ENCODE measurements at regions of chr10 and their contacts with region 1.

Region 1: GRCh38 chr10:125982260-125982948 is 86.0 kb downstream of the FANK1 start:
- DNase-seq: peak; percentile 18 to 47
- H3K4me3 ChIP-seq: no peak overlapping the region
- H3K27ac ChIP-seq: no peak overlapping the region
- H3K4me1 ChIP-seq: no peaks in the 10 kb centered on the region
- H3K27me3 ChIP-seq: no peaks in the 10 kb centered on the region
- CTCF ChIP-seq: peak; percentile 72

Region 2: DNA sequence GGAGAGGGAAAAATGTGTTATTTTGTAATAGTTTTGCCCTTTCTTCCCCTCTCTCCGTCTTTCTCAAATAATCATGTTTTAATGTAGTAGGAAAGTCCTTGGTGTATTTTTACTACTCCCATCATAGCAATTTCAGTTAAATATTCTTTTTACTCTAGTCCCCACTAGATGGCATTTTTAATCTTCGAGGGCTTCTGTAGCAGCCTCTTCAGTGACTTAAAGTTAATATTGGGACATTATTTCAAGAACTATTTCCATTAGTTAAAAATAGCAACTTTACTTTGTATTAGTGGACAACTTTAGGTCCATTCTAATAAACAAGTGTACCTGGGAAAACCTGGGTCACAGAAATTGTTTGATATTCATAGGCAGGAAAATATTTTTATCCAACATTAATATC is 239.9 kb before region 1 on chr10:
- CTCF ChIA-PET with region 1: no interaction called
- POLR2A ChIA-PET with region 1: no interaction called
- intact Hi-C with region 1: no loop called
- DNase-seq: no peak
- H3K4me3 ChIP-seq: no peak overlapping the region
- H3K27ac ChIP-seq: no peak overlapping the region
- H3K4me1 ChIP-seq: no peaks in the 10 kb centered on the region
- H3K27me3 ChIP-seq: no peaks in the 10 kb centered on the region
- CTCF ChIP-seq: peak; percentile 31; the same call in 1 of the 2 replicates

Region 3: GRCh38 chr10:125868372-125868975 is 113.9 kb before region 1 on chr10:
- CTCF ChIA-PET with region 1: interaction called, 3 read pairs
- POLR2A ChIA-PET with region 1: no interaction called
- intact Hi-C with region 1: loop called (anchors 5 kb)
- DNase-seq: peak in 1 of 2 experiments; percentile 9
- H3K4me3 ChIP-seq: no peak overlapping the region
- H3K27ac ChIP-seq: no peak overlapping the region
- H3K4me1 ChIP-seq: no peaks in the 10 kb centered on the region
- H3K27me3 ChIP-seq: no peaks in the 10 kb centered on the region
- CTCF ChIP-seq: peak; percentile 87

Region 4: GRCh38 chr10:126013489-126014281 is 31.3 kb after region 1 on chr10:
- CTCF ChIA-PET with region 1: no interaction called
- POLR2A ChIA-PET with region 1: no interaction called
- intact Hi-C with region 1: no loop called
- DNase-seq: peak in 1 of 2 experiments; percentile 18
- H3K4me3 ChIP-seq: no peak overlapping the region
- H3K27ac ChIP-seq: no peak overlapping the region
- H3K4me1 ChIP-seq: peaks cover 20% of the 10 kb centered on the region
- H3K27me3 ChIP-seq: no peaks in the 10 kb centered on the region
- CTCF ChIP-seq: no peak

Region 5: DNA sequence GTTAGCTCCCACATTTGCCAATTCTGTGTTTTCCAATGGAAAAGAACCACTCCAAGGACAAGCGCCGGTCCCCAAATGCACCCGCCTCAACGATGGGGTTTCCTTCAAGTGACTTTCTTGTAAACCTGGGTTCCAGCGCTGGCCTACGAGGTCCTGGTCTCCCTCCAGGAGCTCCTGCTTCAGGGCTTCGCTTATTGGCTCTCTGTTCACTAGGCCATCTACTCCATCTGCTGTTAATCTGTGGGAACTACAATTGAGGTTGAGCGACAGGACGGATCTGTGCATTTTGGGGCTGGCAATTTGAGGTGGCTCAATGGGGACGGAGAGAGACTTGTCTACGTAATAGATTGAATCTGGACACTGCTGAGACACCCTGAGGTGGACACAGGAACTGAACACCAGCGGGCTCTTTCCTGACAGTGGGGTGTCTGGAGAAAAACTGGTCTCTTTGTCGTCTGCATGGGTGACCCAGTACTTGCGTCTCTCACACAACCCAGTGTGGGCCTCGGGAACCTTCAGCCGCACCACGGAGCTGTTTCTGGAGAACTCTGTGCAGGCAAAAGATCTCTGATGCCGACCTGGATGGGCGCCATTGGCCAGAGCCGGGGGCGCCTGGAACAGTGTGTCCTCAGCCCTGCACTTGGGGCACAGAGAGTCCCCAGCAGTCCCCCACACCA is 521.8 kb after region 1 on chr10:
- CTCF ChIA-PET with region 1: interaction called, 3 read pairs
- POLR2A ChIA-PET with region 1: no interaction called
- intact Hi-C with region 1: loop called (anchors 1 kb)
- DNase-seq: peak; percentile 23 to 44
- H3K4me3 ChIP-seq: no peak overlapping the region
- H3K27ac ChIP-seq: no peak overlapping the region
- H3K4me1 ChIP-seq: 0 out of 2 replicates have a peak, but pooled peaks cover 3% of the 10 kb centered on the region
- H3K27me3 ChIP-seq: no peaks in the 10 kb centered on the region
- CTCF ChIP-seq: peak; percentile 81

Region 6: DNA sequence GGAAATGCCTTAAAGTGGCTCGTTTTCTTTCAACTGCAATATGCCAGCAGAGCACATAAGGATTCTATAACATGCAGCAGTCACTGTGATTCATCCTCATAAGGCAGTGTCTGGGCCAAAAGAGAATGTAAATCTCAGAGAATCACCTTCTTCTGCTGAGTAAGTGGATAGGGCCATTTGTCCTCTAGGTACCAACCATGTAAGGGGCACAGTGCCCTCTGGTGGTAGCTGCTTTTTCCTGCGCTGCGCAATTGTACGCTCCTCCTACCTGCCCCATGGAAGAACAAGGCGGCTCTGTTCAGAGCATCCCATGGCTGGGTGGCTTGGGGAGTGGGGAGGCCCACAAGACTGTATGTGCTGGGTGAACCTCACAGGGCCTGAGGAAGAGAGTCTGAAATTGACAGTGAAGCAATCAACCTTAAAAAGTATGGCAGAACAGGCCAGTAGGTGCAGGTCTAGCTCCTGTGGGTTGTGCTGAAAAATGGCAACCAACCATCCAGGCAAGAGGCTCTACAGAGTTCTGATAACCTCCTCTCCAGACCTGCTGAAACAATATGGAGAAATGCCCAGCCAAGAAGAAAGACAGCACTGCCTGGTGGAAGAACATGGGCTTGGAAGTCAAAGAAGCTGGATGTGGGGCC is 766.7 kb after region 1 on chr10:
- CTCF ChIA-PET with region 1: no interaction called
- POLR2A ChIA-PET with region 1: no interaction called
- intact Hi-C with region 1: loop called (anchors 1 kb)
- DNase-seq: peak; percentile 40 to 63
- H3K4me3 ChIP-seq: no peak overlapping the region
- H3K27ac ChIP-seq: no peak overlapping the region
- H3K4me1 ChIP-seq: no peaks in the 10 kb centered on the region
- H3K27me3 ChIP-seq: no peaks in the 10 kb centered on the region
- CTCF ChIP-seq: peak; percentile 58

Measured in PC-9 (cell line).